Sciatic nerve (tissue), 2 donors: ENCODE measurements at regions of chr12 and their contacts with region 1.

Region 1: DNA sequence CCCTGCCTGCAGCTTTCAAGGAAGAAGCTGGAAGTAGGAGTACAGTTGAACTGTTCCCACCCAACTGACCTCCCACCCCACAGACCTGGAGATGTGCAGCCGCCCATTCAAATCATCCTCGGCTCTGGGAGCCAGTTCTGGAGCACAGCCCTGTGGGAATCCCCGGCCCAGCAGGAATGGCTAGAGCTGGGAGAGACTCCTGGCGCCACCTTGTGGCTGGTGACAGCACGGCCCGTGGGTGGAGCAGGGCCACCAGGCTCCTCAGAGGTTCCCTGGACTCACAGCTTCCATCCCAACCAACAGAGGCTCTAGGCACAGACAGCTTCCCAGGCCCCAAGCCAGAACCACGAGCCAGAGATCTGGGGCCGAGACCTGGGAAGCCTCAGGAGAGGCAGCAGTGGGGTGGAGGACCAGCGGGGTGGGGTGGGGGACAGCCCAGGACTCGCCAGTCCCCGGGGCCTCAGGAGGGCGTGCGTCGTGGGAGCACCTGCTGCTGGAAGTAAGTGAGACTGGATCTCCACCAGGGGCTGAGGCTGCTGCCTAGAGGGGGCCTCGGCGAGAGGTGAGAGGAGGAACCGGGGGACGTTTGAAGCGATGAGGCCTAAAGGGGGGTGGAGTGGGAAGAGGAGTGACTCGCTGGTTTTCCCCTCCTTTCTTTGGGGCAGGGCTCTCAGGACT is 43.4 kb downstream of the RNF34 start:
- DNase-seq: peak; percentile 89
- ATAC-seq: peak; percentile 88

Region 2: DNA sequence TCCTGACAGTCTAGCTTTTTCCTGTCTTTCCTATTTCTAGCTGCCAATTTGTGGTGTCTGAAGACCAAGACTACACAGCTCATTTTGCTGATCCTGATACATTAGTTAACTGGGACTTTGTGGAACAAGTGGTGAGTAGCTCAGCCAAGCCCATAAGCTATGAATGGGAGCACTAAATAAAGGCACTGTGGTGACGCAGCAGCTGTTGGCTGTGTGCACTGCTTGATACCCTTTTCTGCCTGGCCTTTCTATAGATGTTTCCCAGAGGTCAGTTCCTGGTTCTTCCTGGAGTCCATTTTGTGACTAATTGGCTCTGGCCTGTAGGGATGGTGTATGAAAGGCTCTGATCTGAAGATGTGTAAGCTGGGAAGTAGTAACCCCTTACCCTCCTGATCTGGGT is 888.7 kb before region 1 on chr12:
- intact Hi-C with region 1: no loop called
- DNase-seq: no peak
- ATAC-seq: peak; percentile 13

Region 3: GRCh38 chr12:120737557-120738251 is 705.6 kb before region 1 on chr12:
- intact Hi-C with region 1: no loop called
- DNase-seq: no peak
- ATAC-seq: no peak

Region 4: GRCh38 chr12:121345151-121345815 is 98.0 kb before region 1 on chr12:
- intact Hi-C with region 1: loop called (anchors 10 kb)
- DNase-seq: no peak
- ATAC-seq: no peak

Region 5: DNA sequence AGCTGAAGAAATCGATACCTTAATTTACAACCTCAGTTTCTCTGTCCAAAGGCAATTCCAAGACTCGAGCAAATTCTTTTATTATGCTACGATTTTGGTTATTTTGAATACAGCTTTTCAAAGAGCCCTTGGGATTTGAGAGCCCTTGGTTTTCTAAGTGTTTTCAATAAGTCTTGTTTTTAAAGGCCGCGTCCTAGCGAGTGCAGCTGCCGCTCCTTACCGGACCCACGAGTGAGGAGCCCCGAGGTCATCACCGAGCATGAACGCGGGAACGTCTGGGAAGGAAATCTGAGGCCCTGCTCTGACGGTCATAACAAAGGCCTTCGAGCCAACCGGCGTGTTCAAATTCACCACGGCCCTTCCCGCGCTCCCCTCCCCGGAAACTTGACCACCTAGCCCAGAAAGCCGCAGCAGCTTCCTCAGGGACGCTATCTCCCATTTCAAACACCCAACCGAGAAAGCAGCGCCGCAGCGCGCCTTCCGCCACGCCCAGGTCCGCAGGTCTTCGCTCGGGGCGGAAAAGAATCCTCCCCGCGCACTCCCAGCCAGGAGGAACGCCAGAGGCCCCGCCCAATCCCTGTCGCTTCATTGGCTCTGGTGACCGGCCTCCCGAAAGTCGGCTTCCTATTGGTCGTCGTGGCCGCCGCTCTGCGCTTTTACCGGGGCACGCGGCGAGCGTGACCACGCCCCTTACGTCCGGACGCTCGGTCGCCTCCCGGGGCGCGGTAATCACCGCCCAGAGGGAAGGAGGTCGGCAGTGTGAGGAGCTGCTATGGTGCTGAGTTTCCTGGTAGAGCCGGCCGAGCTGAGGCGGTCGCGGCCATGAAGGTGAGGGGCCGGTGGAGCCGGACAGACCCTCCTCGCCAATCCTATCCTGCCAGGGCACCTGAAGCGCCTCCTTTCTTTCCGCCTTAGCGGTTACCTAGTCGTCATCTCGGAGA is 43.7 kb before region 1 on chr12 and contains the start of gene RNF34:
- intact Hi-C with region 1: no loop called
- DNase-seq: peak; percentile 99
- ATAC-seq: peak; percentile 100
- total RNA-seq, gene RNF34: 39.5 TPM